CD14-positive monocyte (primary cell): ENCODE measurements at regions of chr1 and their contacts with region 1.

Region 1: DNA sequence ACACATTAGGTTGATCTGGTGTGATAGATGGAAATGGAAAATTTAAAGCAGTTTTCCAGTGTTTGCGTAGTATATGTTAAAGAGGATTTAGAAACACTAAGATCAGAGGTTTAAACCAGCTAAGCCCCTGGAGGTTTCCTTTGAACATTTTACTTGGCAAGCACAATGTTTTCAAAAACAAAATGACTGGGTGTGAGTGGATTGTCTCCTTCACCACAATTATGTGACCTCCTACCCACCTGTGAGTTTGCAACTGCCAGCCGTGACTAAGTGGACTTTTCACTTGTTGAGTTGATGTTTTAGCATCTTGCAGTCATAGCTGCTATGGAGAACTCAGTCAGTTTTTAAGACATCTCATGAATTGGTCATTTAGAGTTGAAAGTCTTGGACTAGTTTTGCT is 4.7 kb downstream of the CCDC190 start:
- DNase-seq: no peak
- H3K4me3 ChIP-seq: no peak overlapping the region
- H3K4me3 Mint-ChIP-seq: no peak overlapping the region
- H3K27ac ChIP-seq: no peak overlapping the region
- H3K27ac Mint-ChIP-seq: no peak overlapping the region
- H3K4me1 ChIP-seq: no peaks in the 10 kb centered on the region
- H3K4me1 Mint-ChIP-seq: peaks cover 1% of the 10 kb centered on the region
- H3K27me3 ChIP-seq: no peaks in the 10 kb centered on the region
- H3K27me3 Mint-ChIP-seq: peaks cover 3 to 12% (median 6%) of the 10 kb centered on the region in 3 donors
- CTCF ChIP-seq: no peak

Region 2: GRCh38 chr1:163046071-163046470 is 189.8 kb after region 1 on chr1:
- intact Hi-C with region 1: no loop called
- DNase-seq: no peak
- H3K4me3 ChIP-seq: no peak overlapping the region
- H3K4me3 Mint-ChIP-seq: no peak overlapping the region
- H3K27ac ChIP-seq: no peak overlapping the region
- H3K27ac Mint-ChIP-seq: no peak overlapping the region
- H3K4me1 ChIP-seq: no peaks in the 10 kb centered on the region
- H3K4me1 Mint-ChIP-seq: no peaks in the 10 kb centered on the region
- H3K27me3 ChIP-seq: no peaks in the 10 kb centered on the region
- H3K27me3 Mint-ChIP-seq: peaks cover 0 to 5% (median 0%) of the 10 kb centered on the region in 3 donors
- CTCF ChIP-seq: no peak

Region 3: DNA sequence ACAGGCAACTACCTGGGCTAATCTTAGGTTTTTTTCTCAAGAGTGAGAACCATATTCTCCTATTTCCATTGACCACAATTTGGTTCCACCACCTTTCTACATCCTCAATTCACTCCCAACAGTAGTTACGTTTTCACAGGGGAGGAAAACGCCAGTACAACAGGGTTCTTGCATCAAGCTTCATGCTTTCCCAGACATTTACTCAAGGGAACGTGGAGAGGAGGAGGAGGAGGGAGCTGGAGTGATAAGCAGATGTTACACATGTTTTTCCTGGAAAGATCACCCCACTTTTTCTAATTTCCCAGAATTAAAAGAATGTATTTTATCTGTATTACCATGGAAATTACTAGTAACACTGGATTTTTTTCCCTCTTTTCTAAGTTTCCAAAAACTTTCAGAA is 288.2 kb after region 1 on chr1:
- intact Hi-C with region 1: no loop called
- DNase-seq: no peak
- H3K4me3 ChIP-seq: no peak overlapping the region
- H3K4me3 Mint-ChIP-seq: no peak overlapping the region
- H3K27ac ChIP-seq: no peak overlapping the region
- H3K27ac Mint-ChIP-seq: no peak overlapping the region
- H3K4me1 ChIP-seq: no peaks in the 10 kb centered on the region
- H3K4me1 Mint-ChIP-seq: no peaks in the 10 kb centered on the region
- H3K27me3 ChIP-seq: no peaks in the 10 kb centered on the region
- H3K27me3 Mint-ChIP-seq: peaks cover 0 to 2% (median 0%) of the 10 kb centered on the region in 3 donors
- CTCF ChIP-seq: no peak

Region 4: GRCh38 chr1:163315773-163316374 is 459.6 kb after region 1 on chr1:
- intact Hi-C with region 1: loop called in 1 of 2 experiments (anchors 5 kb)
- DNase-seq: peak; percentile 12 to 49 (median 29)
- H3K4me3 ChIP-seq: no peak overlapping the region
- H3K4me3 Mint-ChIP-seq: no peak overlapping the region
- H3K27ac ChIP-seq: no peak overlapping the region
- H3K27ac Mint-ChIP-seq: no peak overlapping the region
- H3K4me1 ChIP-seq: peaks cover 2 to 6% of the 10 kb centered on the region in 2 donors
- H3K4me1 Mint-ChIP-seq: peaks cover 2% of the 10 kb centered on the region
- H3K27me3 ChIP-seq: no peaks in the 10 kb centered on the region
- H3K27me3 Mint-ChIP-seq: peaks cover 0 to 1% (median 0%) of the 10 kb centered on the region in 3 donors
- CTCF ChIP-seq: peak; percentile 82